ENCODE measurements at regions of chr17 and their contacts with region 1.

Region 1: DNA sequence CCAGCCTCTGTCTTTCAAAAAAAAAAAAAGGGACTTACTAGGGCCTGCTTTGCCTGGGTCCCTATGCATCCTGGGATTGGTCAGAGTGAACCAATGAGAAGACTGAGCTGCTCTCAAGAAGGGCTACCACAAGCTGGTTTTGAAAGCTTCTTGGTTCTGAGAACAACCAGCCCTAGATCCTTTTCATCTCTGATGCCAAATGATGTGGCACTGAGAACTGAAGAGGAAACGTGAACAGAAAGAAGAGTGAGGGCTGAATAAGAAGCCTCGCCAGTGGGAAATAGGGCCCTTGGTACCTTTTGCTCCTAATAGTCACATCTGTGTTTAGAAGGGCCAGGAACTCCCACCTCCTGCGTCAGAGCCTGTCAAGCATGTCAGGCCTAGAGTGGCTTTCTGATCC is 10.7 kb downstream of the TACO1 start:
- DNase-seq: peak; percentile 59
- ATAC-seq: peak; percentile 85
- H3K4me3 Mint-ChIP-seq: peak overlapping the region; percentile 51
- H3K27ac Mint-ChIP-seq: peak overlapping the region; percentile 91
- H3K4me1 Mint-ChIP-seq: peaks cover 27% of the 10 kb centered on the region
- H3K27me3 Mint-ChIP-seq: no peaks in the 10 kb centered on the region

Region 2: GRCh38 chr17:63258785-63259184 is 352.6 kb before region 1 on chr17:
- CTCF ChIA-PET with region 1: no interaction called
- POLR2A ChIA-PET with region 1: no interaction called
- intact Hi-C with region 1: no loop called
- DNase-seq: no peak
- ATAC-seq: no peak
- H3K4me3 Mint-ChIP-seq: no peak overlapping the region
- H3K27ac Mint-ChIP-seq: no peak overlapping the region
- H3K4me1 Mint-ChIP-seq: no peaks in the 10 kb centered on the region
- H3K27me3 Mint-ChIP-seq: no peaks in the 10 kb centered on the region

Region 3: DNA sequence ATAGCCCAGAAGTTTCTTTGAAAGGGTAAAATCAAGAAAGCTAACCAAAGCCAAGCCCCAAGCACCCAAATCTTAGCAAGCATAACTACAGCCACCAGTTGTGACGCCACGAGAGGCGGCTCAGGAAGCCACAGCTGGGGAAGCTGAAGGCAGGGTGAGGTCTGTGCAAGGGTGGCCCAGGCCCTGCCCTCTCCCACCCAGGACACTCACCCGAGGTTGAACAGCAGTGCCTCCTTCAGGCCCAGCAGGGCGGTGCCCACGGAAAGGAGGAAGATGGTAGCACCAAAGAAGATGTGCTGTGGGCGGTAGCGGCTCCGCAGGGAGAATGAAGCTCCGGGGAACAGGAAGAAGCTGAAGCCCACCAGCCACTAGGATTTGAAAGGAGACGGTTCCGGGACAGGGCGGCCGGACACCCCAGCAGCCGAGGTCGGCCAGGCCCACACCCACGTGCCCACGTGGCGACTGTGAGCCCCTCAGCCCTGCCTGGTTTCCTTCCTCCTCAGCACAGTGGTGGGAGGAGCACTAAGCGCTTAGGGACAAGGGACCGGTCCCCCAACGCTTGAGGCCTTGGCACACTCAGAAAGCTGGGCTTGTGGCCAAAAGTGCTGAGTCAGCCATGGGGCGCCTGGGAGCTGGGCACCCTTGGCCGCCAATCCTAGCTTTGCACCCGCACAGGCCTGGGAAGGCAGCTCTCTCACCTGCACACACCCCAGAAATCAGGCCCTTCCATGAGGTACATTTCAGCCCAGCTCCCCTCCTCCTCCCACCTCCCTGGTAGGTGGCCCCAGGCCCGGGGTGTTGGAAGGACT is 176.3 kb before region 1 on chr17:
- CTCF ChIA-PET with region 1: interaction called, 17 read pairs
- POLR2A ChIA-PET with region 1: no interaction called
- intact Hi-C with region 1: no loop called
- DNase-seq: peak; percentile 46
- ATAC-seq: no peak
- H3K4me3 Mint-ChIP-seq: no peak overlapping the region
- H3K27ac Mint-ChIP-seq: peak overlapping the region; percentile 12
- H3K4me1 Mint-ChIP-seq: peaks cover 16% of the 10 kb centered on the region
- H3K27me3 Mint-ChIP-seq: no peaks in the 10 kb centered on the region

Region 4: DNA sequence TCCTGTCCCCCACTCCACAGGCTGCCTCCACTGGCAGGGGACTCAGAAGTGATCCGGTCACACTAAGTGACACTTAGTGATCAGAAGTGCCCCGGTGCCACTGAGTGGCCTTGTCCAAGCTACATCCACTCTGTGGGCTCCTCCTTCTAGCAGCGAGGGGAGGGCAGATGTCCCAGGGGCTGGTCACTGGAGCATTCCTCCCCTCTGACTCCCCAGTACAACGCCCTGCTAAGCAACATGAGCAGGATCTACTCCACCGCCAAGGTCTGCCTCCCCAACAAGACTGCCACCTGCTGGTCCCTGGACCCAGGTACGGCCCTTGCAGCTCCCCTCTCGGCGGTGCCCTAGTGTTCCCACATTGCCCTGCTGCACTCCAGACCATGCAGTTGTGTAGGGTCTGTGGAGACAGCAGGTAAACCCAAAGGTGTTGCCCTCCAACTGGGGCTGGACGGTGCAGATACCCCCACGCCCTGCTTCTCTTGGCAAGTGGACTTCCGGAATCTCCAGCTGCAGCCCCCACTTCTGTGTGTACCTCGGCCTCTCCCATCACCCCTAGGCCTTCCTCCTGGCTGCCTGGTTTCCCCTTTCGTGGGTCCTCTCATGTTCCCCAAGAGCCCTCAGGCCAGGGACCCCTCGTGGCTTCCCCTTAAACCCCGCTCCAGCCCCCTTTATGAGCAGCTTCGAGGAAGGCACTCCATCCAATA is 132.4 kb before region 1 on chr17:
- CTCF ChIA-PET with region 1: interaction called, 24 read pairs
- POLR2A ChIA-PET with region 1: no interaction called
- intact Hi-C with region 1: loop called (anchors 1 to 5 kb)
- DNase-seq: peak; percentile 89
- ATAC-seq: peak; percentile 92
- H3K4me3 Mint-ChIP-seq: no peak overlapping the region
- H3K27ac Mint-ChIP-seq: no peak overlapping the region
- H3K4me1 Mint-ChIP-seq: peaks cover 12% of the 10 kb centered on the region
- H3K27me3 Mint-ChIP-seq: peaks cover 27% of the 10 kb centered on the region

Region 5: GRCh38 chr17:63592797-63593472 is 18.4 kb before region 1 on chr17:
- CTCF ChIA-PET with region 1: interaction called, 11 read pairs
- POLR2A ChIA-PET with region 1: interaction called, 4 read pairs
- intact Hi-C with region 1: no loop called
- DNase-seq: no peak
- ATAC-seq: no peak
- H3K4me3 Mint-ChIP-seq: no peak overlapping the region
- H3K27ac Mint-ChIP-seq: no peak overlapping the region
- H3K4me1 Mint-ChIP-seq: peaks cover 9% of the 10 kb centered on the region
- H3K27me3 Mint-ChIP-seq: no peaks in the 10 kb centered on the region

Region 6: GRCh38 chr17:63634163-63634562 is 22.8 kb after region 1 on chr17:
- CTCF ChIA-PET with region 1: interaction called, 16 read pairs
- POLR2A ChIA-PET with region 1: interaction called, 3 read pairs
- intact Hi-C with region 1: no loop called
- DNase-seq: no peak
- ATAC-seq: peak; percentile 19
- H3K4me3 Mint-ChIP-seq: no peak overlapping the region
- H3K27ac Mint-ChIP-seq: peak overlapping the region; percentile 73
- H3K4me1 Mint-ChIP-seq: peaks cover 20% of the 10 kb centered on the region
- H3K27me3 Mint-ChIP-seq: no peaks in the 10 kb centered on the region

Measured in activated CD4-positive, alpha-beta T cell treated with anti-CD3 and anti-CD28 coated beads for 36 hours (primary cell).